HAP-1 (cell line): ENCODE measurements at regions of chr9 and their contacts with region 1.

Region 1: DNA sequence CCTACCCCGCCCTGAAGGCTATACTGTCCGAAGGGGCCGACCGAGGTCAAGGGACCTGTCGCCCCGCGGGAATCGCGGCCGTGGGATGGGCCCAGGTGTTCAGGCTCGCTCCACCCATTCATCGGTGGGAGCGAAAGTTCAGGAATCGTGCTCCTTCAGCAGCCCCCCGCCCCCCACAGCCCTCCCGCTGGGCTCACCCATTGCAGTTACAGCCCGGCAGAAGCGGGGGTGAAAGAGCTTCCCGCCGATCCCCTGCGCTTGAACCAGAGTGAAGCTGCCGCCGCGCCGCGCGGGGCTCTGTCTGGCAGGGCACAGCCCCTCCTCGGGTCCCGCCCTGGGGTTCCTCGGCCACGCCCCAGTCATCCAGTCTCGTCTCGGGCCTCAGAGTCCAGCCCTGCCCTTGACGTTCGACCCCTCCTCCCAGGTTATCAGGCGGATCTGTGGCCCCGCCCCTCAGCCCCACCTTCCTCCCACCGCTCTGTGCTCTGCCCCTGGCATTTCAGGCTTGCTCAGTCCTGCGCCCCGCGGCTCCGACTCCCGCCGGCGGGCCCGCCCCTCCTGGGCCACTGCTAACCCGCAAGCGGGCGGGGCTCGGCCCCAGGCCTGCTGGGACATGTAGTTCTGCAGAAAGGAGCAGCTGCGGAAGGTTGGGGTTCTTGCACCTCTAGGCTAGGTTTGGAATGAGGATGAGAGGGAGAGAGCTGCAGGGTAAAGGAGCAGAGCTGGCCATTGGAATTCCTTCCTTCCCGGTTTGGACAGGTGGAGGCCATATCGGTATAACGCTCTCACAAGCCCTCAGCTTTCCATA is at the start of gene MYORG:
- DNase-seq: peak; percentile 98 to 100
- H3K4me3 ChIP-seq: peak within 1 kb of the TSS; percentile 74
- H3K4me1 ChIP-seq: peaks cover 13% of the 10 kb centered on the region
- H3K27me3 ChIP-seq: no peaks in the 10 kb centered on the region

Region 2: DNA sequence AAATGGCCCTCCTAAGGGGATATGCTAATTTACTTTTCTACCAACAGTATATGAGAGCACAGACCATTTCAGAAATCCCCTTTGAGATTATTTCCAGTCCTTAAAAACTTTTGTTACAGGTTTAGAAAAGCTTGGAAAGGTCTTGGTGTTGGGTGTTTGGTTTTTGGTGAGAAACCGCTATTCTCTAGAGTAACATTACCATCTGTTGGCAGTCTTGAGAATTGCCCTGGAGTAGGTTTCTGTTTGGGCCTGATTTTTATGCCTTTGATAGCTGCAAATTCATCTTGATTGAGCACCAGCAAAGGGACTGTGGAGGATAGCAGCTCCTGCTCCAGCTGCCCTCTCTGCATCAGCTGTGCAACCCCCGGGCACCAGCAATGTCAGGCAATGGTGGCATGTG is 39.4 kb before region 1 on chr9:
- in situ Hi-C with region 1: loop called (anchors 5 kb)
- DNase-seq: no peak
- H3K4me3 ChIP-seq: no peak overlapping the region
- H3K4me1 ChIP-seq: peaks cover 17% of the 10 kb centered on the region
- H3K27me3 ChIP-seq: no peaks in the 10 kb centered on the region